PC-9 (cell line): ENCODE measurements at regions of chr6 and their contacts with region 1.

Region 1: GRCh38 chr6:131532580-131533039 is 40.4 kb upstream of the ARG1 start:
- DNase-seq: no peak
- H3K4me3 ChIP-seq: no peak overlapping the region
- H3K27ac ChIP-seq: no peak overlapping the region
- H3K4me1 ChIP-seq: no peaks in the 10 kb centered on the region
- H3K27me3 ChIP-seq: no peaks in the 10 kb centered on the region
- CTCF ChIP-seq: no peak

Region 2: GRCh38 chr6:130885392-130886192 is 647.0 kb before region 1 on chr6:
- CTCF ChIA-PET with region 1: interaction called, 11 read pairs
- POLR2A ChIA-PET with region 1: no interaction called
- intact Hi-C with region 1: loop called (anchors 1 kb)
- DNase-seq: peak; percentile 61 to 67
- H3K4me3 ChIP-seq: no peak overlapping the region
- H3K27ac ChIP-seq: no peak overlapping the region
- H3K4me1 ChIP-seq: no peaks in the 10 kb centered on the region
- H3K27me3 ChIP-seq: no peaks in the 10 kb centered on the region
- CTCF ChIP-seq: peak; percentile 98

Region 3: DNA sequence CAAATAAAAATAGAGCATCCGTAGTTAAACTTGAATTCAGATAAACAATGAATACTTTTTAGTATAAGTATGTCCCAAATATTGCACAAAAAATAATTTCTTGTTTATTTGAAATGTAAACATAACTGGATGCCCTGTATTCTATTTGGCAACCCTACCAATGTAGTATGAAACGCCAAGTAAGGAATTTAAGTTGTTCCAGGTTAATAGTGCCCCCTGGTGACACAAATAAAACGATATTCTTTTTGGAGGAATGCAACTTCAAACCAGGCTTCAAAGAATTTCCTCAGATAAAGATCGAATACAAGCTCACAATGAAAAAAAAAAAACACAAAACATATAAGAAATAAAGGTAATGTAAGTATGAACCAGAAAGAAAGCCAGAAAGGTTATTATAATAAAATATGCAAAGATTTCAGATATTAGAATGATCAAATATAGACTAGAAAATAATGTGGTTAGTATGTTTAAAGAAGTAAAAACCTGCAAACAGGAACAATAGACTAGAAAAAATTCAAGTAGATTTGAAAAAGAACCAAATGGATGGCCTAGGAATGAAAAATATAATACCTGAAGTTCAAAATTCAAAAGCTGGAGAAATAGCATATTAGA is 415.8 kb before region 1 on chr6:
- CTCF ChIA-PET with region 1: interaction called, 4 read pairs
- POLR2A ChIA-PET with region 1: no interaction called
- intact Hi-C with region 1: loop called (anchors 5 kb)
- DNase-seq: peak in 1 of 2 experiments; percentile 52
- H3K4me3 ChIP-seq: no peak overlapping the region
- H3K27ac ChIP-seq: no peak overlapping the region
- H3K4me1 ChIP-seq: no peaks in the 10 kb centered on the region
- H3K27me3 ChIP-seq: no peaks in the 10 kb centered on the region
- CTCF ChIP-seq: peak; percentile 90

Region 4: DNA sequence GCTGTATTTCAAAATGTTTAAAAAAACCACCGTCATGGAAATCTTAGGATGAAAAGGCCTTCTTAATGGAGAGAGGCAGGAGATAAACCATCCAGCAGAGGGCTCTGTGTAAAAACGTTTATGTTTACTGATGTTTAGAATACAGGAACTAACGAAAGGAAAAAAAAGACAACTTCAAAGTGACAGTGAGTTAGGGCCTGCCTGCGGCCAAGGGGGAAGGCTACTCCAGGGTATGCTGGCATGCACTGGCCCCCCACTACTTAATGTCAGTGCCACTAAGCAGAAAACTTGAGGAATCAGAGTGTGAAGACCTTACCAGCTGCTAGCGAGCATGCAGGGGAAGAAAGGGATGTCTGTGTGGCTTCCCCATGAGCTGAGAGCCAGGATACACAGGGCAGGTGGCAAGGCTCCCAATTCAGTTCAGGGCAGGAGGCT is 349.6 kb before region 1 on chr6:
- CTCF ChIA-PET with region 1: no interaction called
- POLR2A ChIA-PET with region 1: no interaction called
- intact Hi-C with region 1: loop called (anchors 1 kb)
- DNase-seq: no peak
- H3K4me3 ChIP-seq: no peak overlapping the region
- H3K27ac ChIP-seq: no peak overlapping the region
- H3K4me1 ChIP-seq: no peaks in the 10 kb centered on the region
- H3K27me3 ChIP-seq: no peaks in the 10 kb centered on the region
- CTCF ChIP-seq: peak; percentile 69

Region 5: DNA sequence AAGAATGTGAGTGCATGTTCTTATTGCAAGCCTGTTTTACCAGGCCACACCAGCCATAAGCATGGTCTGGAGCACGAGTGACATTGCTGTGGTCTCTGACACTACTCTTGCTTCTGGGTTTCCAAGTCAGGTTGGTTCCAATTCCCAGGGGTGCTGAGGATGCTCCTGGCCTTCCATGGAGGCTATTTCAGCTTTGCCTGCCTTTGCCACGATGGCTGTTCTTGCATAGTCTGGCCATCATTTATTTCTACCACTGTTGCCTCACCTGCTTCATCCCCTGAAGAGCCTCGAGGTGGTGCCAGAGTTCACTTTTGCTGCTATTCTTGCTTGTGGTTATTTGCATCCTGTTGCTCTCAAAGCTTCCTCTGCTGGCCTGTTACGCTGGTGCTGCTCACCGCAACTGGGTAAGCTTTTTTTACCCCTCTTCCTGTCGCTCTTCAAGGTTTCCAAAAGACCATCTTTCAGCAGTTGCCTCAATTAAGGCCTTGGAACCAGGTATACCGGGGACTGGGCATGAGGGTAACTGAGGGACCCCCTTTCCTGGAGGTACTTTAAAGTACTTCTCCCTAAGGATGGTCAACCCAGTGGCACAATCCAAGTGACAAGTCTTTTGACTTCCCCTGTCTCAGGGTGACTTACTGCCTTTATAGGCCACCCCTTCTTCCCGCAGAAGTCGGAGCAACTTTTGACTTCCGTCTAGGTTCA is 332.9 kb before region 1 on chr6:
- CTCF ChIA-PET with region 1: no interaction called
- POLR2A ChIA-PET with region 1: no interaction called
- intact Hi-C with region 1: loop called (anchors 1 kb)
- DNase-seq: peak in 1 of 2 experiments; percentile 5
- H3K4me3 ChIP-seq: no peak overlapping the region
- H3K27ac ChIP-seq: no peak overlapping the region
- H3K4me1 ChIP-seq: no peaks in the 10 kb centered on the region
- H3K27me3 ChIP-seq: no peaks in the 10 kb centered on the region
- CTCF ChIP-seq: peak; percentile 74